Activated T-helper 1 cell treated with anti-CD3 and anti-CD28 coated beads, Interleukin-12 subunit alpha, Interleukin-12 subunit beta, Interleukin-2, Interleukin-4 antibody, amounts not matched to agents 30 ng/mL and 10 ng/mL and 1 ng/mL, durations not matched to agents 14 hours and 24 hours and 36 hours (primary cell): ENCODE measurements at regions of chr11 and their contacts with region 1.

Region 1: DNA sequence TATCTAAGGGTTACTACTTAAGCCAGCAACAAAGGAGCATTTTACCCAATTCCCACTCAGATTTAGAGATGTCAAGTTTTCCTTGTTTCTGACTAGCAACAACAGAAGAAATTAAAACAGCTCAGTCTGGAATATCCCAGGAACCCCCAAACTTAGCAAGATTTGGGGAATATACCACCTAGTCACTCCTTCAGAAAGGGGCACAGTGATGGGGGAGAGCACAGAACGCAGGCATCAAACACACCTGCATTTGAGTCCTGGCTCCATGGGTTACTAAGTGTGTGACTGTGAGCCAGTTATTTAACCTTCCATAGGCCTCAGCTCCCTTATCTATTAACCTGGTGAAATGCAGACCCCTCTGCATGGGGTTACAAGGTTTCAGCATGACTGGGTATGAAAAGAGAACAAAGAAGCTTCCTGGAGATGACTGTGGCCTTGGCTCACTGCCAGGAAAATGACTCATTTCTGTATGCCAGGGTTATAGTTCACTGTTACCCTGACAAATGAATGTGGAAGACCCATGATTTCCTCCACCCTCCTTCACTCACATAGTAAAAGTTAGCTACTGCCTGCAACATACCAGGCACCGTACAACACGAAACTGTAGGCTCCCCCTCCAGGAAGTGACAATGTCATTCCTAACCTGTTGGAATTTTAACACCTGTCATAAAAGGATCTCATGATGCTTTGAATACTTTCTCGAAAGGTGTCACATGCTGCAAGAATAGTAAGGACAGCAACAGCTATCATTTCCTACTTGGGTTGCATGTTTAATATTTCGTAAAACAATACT is 79.6 kb downstream of the ME3 start:
- DNase-seq: peak; percentile 81
- H3K4me3 Mint-ChIP-seq: peak overlapping the region; percentile 63
- H3K27ac Mint-ChIP-seq: peak overlapping the region; percentile 93
- H3K4me1 Mint-ChIP-seq: peaks cover 61% of the 10 kb centered on the region
- H3K27me3 Mint-ChIP-seq: no peaks in the 10 kb centered on the region

Region 2: DNA sequence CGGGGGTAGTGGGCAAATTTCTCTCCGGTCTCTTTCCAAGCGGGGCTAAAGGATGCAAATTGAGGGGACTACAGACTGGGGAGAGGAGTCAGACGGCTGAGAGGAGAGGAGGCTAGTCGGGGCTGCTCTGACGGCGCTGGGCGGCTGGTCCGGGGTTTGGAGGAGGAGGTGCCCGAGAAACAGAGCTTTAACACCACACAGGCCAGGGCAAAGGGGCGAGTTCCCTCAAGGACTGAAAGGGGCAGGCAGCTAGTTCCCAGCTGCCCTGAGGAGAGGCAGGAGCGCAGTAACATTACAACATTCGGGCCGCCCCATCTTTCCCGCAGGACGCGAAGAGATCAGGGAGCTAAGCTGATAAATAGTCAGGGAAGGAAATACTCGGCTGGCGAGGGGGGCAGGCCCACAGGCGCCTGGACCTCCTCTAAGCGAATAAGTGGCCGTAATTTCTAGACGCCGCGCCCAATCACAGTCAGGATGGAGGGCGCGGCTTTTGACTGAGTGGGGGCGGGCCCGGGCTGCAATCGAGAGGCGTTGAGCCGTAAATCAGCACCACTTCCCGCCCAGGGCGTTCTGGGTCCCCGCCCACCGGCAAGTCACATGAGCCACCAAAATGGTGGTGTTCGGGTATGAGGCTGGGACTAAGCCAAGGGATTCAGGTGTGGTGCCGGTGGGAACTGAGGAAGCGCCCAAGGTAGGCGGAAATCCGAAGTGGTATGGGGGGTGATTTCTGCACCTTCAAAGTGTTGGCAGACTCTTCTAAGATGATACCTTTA is 964.7 kb before region 1 on chr11 and contains the start of gene TMEM126B:
- intact Hi-C with region 1: loop called (anchors 5 kb)
- DNase-seq: peak; percentile 96
- H3K4me3 Mint-ChIP-seq: peak within 1 kb of the TSS; percentile 97
- H3K27ac Mint-ChIP-seq: peak within 1 kb of the TSS; percentile 94
- H3K4me1 Mint-ChIP-seq: peaks cover 52% of the 10 kb centered on the region
- H3K27me3 Mint-ChIP-seq: peaks cover 6% of the 10 kb centered on the region
- total RNA-seq, gene TMEM126B: 52.5 and 57.2 TPM in 2 replicates

Region 3: DNA sequence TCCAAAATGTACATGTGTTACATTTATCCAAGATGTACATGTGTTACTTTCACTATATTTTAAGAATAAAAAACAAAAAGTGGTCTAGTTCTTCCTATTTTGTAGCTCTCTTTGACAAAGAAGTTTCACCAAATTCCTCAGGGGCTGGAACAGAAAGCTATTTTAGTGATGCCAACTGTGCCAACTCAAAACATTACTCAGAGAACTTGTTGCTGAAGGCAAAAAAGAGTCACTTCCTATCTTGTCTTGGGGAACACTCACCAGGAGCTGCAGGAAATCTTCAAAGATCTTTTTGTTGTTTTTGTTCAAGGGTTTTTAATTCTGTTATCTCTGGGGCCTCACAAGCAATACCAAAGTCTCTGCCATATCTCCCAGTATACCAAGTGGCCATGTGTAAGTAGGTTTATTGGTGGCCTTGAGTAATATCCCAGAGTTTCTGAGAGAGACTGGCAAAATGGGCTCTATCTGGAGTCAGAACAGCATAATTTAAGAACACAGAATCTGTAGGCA is 361.9 kb before region 1 on chr11:
- intact Hi-C with region 1: loop called (anchors 2 kb)
- DNase-seq: no peak
- H3K4me3 Mint-ChIP-seq: no peak overlapping the region
- H3K27ac Mint-ChIP-seq: peak overlapping the region; percentile 47
- H3K4me1 Mint-ChIP-seq: peaks cover 68% of the 10 kb centered on the region
- H3K27me3 Mint-ChIP-seq: no peaks in the 10 kb centered on the region

Region 4: DNA sequence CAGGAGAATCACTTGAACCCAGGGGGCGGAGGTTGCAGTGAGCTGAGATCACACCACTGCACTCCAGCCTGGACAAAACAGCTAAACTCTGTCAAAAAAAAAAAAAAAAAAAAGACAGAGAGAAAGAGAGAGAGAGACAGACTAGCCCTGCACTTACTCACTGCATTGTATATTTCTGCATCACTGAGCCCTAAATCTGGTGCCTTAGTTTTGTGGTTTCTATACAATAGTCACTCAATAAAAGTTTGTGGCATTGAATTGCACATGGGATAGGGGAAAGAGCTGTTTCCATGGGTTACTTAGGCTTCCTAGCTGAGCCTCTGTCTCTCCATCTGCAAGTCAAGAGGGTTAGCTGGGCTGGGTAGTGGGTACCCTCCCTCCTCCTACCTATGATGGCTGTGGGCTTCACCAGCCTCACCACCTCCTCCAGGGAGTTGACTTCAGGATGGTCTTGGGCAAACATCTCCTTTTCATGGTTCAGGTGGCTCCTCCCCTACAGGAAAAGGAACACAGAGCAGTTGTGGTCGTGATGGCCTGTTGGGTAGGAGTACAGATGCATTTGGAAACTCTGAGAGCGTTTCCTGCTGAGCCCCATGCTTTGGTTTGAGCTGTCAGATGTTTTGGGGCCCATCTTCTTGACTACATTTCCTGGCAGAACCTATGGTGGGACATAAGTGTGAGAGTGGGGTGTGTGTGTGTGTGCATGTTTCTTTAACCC is 144.9 kb before region 1 on chr11:
- intact Hi-C with region 1: loop called (anchors 2 kb)
- DNase-seq: peak; percentile 31
- H3K4me3 Mint-ChIP-seq: peak overlapping the region; percentile 48
- H3K27ac Mint-ChIP-seq: no peak overlapping the region
- H3K4me1 Mint-ChIP-seq: peaks cover 43% of the 10 kb centered on the region
- H3K27me3 Mint-ChIP-seq: no peaks in the 10 kb centered on the region

Region 5: GRCh38 chr11:86511086-86511551 is 81.7 kb before region 1 on chr11:
- intact Hi-C with region 1: loop called (anchors 1 kb)
- DNase-seq: no peak
- H3K4me3 Mint-ChIP-seq: no peak overlapping the region
- H3K27ac Mint-ChIP-seq: no peak overlapping the region
- H3K4me1 Mint-ChIP-seq: no peaks in the 10 kb centered on the region
- H3K27me3 Mint-ChIP-seq: no peaks in the 10 kb centered on the region

Region 6: DNA sequence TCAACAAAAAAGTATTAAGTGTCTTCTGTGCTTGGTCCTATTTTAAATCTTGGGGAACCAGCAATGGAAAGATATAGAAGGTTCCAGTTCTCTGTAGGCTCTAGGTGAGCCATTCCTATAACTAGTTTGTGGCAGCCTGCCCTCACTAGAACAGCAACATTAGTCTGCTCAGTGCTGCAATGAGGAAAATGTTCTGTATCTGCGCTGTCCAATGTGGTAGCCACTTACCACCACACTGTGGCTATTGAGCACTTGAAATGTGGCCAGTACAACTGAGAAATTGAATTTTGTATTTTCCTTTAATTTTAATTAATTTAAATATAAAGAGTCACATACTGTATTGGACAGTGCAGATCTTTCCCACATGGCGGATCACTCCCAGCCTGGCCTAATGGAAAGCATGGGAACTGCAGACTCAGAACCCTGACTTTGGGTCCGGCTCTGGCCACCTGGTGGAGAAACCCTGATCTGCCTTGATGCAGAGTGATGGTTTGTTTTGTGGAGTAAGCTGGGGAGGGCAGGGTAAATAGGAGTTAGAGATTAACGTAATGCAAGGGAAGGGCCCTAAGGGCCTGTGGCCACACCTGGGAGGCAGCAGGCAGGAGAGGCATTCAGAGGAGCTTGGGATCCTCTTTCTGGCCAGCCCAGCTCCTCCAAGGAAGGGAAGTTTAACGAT is 21.4 kb before region 1 on chr11:
- intact Hi-C with region 1: no loop called
- DNase-seq: no peak
- H3K4me3 Mint-ChIP-seq: no peak overlapping the region
- H3K27ac Mint-ChIP-seq: no peak overlapping the region
- H3K4me1 Mint-ChIP-seq: peaks cover 6% of the 10 kb centered on the region
- H3K27me3 Mint-ChIP-seq: peaks cover 2% of the 10 kb centered on the region

Region 7: DNA sequence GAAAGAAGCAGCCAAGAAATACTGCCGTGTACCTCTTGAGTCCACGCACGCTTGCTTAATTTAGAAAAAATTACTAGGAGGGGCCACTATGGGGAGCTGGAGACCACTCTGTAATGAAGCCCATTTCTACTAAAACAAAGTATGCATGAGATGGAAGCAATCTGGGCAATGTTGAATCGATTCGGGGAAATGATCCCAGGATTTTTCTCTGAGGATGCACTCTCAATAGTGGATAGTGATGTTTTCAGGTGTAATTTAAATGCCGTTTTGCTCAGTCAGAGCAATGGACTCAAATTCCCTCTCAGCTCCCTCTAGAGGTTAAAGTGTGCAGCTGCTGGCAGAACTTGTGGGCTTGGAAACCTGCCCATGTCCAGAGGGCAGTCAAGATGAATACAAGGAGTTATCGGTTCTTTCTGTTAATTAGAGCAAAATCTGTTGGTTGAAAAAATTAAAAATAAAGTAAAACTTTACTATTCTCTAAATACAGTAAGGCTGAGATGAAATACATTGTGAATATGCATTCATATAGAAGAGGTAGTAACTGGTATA is 15.5 kb after region 1 on chr11:
- intact Hi-C with region 1: loop called (anchors 2 kb)
- DNase-seq: peak; percentile 22
- H3K4me3 Mint-ChIP-seq: no peak overlapping the region
- H3K27ac Mint-ChIP-seq: no peak overlapping the region
- H3K4me1 Mint-ChIP-seq: peaks cover 30% of the 10 kb centered on the region
- H3K27me3 Mint-ChIP-seq: peaks cover 3% of the 10 kb centered on the region

Region 8: GRCh38 chr11:86688398-86689179 is 95.7 kb after region 1 on chr11:
- intact Hi-C with region 1: loop called (anchors 1 kb)
- DNase-seq: peak; percentile 12
- H3K4me3 Mint-ChIP-seq: peak overlapping the region; percentile 60
- H3K27ac Mint-ChIP-seq: peak overlapping the region; percentile 92
- H3K4me1 Mint-ChIP-seq: peaks cover 26% of the 10 kb centered on the region
- H3K27me3 Mint-ChIP-seq: peaks cover 8% of the 10 kb centered on the region

Region 9: GRCh38 chr11:86938900-86939880 is 346.3 kb after region 1 on chr11:
- intact Hi-C with region 1: no loop called
- DNase-seq: no peak
- H3K4me3 Mint-ChIP-seq: no peak overlapping the region
- H3K27ac Mint-ChIP-seq: no peak overlapping the region
- H3K4me1 Mint-ChIP-seq: no peaks in the 10 kb centered on the region
- H3K27me3 Mint-ChIP-seq: peaks cover 11% of the 10 kb centered on the region